PC-9 (cell line): ENCODE measurements at regions of chr6 and their contacts with region 1.

Region 1: GRCh38 chr6:28225056-28225834 is at the start of gene ZSCAN9:
- DNase-seq: peak; percentile 86 to 87
- H3K4me3 ChIP-seq: peak within 1 kb of the TSS; percentile 79
- H3K27ac ChIP-seq: peak within 1 kb of the TSS; percentile 33
- H3K4me1 ChIP-seq: peaks cover 16% of the 10 kb centered on the region
- H3K27me3 ChIP-seq: no peaks in the 10 kb centered on the region
- CTCF ChIP-seq: no peak
- total RNA-seq, gene ZSCAN9: 19.2 and 20.4 TPM in 2 replicates

Region 2: GRCh38 chr6:28252009-28252975 is 27.0 kb after region 1 on chr6 and contains the start of gene ZKSCAN4:
- CTCF ChIA-PET with region 1: no interaction called
- POLR2A ChIA-PET with region 1: interaction called, 5 read pairs
- intact Hi-C with region 1: loop called (anchors 1 kb)
- DNase-seq: peak; percentile 73 to 76
- H3K4me3 ChIP-seq: peak within 1 kb of the TSS; percentile 99
- H3K27ac ChIP-seq: no peak within 1 kb of the TSS
- H3K4me1 ChIP-seq: peaks cover 19% of the 10 kb centered on the region
- H3K27me3 ChIP-seq: no peaks in the 10 kb centered on the region
- CTCF ChIP-seq: no peak
- total RNA-seq, gene ZKSCAN4: 6.0 and 6.7 TPM in 2 replicates

Region 3: GRCh38 chr6:28355743-28356665 is 130.8 kb after region 1 on chr6:
- CTCF ChIA-PET with region 1: no interaction called
- POLR2A ChIA-PET with region 1: no interaction called
- intact Hi-C with region 1: loop called (anchors 5 kb)
- DNase-seq: peak; percentile 75 to 80
- H3K4me3 ChIP-seq: peak overlapping the region; percentile 70
- H3K27ac ChIP-seq: peak overlapping the region; percentile 55
- H3K4me1 ChIP-seq: peaks cover 28% of the 10 kb centered on the region
- H3K27me3 ChIP-seq: no peaks in the 10 kb centered on the region
- CTCF ChIP-seq: peak; percentile 86

Region 4: DNA sequence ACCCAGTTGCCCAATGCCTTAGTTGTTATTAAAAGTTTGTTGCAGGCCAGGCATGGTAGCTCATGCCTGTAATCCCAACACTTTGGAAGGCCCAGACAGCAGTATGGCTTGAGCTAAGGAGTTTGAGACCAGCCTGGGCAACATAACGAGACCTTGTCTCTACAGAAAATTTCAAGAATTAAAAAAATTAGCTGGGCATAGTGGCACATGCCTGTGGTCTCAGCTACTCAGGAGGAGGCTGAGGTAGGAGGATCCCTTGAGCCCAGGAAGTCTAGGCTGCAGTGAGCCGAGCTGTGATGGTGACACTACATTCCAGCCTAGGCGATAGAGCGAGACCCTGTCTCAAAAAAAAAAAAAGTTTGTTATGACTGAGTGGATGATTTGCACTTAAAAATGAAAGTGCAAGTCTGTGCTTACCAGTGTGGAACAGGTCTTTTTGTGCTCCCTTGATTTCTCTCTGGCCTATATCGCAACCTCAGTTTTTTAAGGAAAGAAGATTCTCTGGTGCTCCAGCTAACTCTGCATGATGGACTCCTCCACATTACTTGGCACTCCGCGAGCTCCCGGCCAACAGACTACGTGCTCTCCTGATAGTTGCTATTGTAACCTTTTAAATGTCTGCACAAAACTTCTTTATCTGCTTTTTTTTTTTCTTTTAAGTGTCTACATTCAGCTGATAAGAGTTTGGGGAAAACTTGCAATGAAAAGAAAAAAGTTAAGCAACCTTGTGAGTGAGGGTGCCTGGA is 146.6 kb after region 1 on chr6:
- CTCF ChIA-PET with region 1: no interaction called
- POLR2A ChIA-PET with region 1: interaction called, 11 read pairs
- intact Hi-C with region 1: no loop called
- DNase-seq: no peak
- H3K4me3 ChIP-seq: no peak overlapping the region
- H3K27ac ChIP-seq: no peak overlapping the region
- H3K4me1 ChIP-seq: no peaks in the 10 kb centered on the region
- H3K27me3 ChIP-seq: no peaks in the 10 kb centered on the region
- CTCF ChIP-seq: no peak

Region 5: DNA sequence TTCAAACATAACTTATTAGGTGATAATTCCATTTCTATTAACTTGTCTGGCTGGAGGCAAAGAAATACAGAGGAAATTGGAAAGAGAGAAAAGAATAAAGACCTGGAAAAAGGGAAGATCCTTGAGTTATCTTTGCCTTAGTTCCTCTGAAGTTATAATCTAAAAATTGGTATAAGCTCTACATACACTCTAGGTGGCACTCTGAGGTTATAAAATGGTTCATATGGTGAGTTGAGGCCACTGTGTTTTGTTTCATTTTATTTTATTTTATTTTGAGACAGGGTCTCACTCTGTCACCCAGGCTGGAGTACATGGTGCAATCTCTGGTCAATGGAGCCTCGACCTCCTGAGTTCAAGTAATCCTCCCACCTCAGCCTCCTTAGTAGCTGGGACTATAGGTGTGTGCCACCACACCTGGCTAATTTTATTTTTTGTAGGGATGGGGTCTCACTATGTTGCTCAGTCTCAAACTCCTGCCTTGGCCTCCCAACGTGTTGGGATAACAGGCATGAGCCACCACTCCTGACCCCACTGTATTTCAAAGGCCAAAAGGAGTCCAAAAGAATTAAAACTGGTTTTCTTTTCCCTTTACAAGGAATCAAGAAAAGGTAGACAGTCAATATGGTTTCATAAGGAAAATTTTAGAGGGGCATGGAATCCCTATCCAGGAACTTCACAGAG is 271.0 kb after region 1 on chr6:
- CTCF ChIA-PET with region 1: no interaction called
- POLR2A ChIA-PET with region 1: no interaction called
- intact Hi-C with region 1: no loop called
- DNase-seq: no peak
- H3K4me3 ChIP-seq: no peak overlapping the region
- H3K27ac ChIP-seq: no peak overlapping the region
- H3K4me1 ChIP-seq: peaks cover 20% of the 10 kb centered on the region
- H3K27me3 ChIP-seq: no peaks in the 10 kb centered on the region
- CTCF ChIP-seq: peak; percentile 41; the same call in 1 of the 2 replicates